ENCODE measurements at regions of chr4 and their contacts with region 1.

Region 1: GRCh38 chr4:102760645-102761295 is at the start of gene MANBA:
- DNase-seq: peak; percentile 90
- H3K4me3 ChIP-seq: peak within 1 kb of the TSS; percentile 52 to 99 (median 84)
- H3K27ac ChIP-seq: peak within 1 kb of the TSS; percentile 78 to 93 (median 82)
- H3K4me1 ChIP-seq: peaks cover 0 to 17% (median 10%) of the 10 kb centered on the region in 4 donors
- H3K27me3 ChIP-seq: no peaks in the 10 kb centered on the region
- CTCF ChIP-seq: no peak
- EP300 ChIP-seq: no peak
- POLR2A ChIP-seq: peak in 1 of 2 donors; percentile 32
- total RNA-seq, gene MANBA: 25.3 to 47.4 (median 44.8) TPM

Region 2: GRCh38 chr4:102352781-102353180 is 408.0 kb before region 1 on chr4:
- intact Hi-C with region 1: no loop called
- DNase-seq: no peak
- H3K4me3 ChIP-seq: no peak overlapping the region
- H3K27ac ChIP-seq: no peak overlapping the region
- H3K4me1 ChIP-seq: no peaks in the 10 kb centered on the region
- H3K27me3 ChIP-seq: no peaks in the 10 kb centered on the region
- CTCF ChIP-seq: no peak
- EP300 ChIP-seq: no peak
- POLR2A ChIP-seq: no peak

Region 3: DNA sequence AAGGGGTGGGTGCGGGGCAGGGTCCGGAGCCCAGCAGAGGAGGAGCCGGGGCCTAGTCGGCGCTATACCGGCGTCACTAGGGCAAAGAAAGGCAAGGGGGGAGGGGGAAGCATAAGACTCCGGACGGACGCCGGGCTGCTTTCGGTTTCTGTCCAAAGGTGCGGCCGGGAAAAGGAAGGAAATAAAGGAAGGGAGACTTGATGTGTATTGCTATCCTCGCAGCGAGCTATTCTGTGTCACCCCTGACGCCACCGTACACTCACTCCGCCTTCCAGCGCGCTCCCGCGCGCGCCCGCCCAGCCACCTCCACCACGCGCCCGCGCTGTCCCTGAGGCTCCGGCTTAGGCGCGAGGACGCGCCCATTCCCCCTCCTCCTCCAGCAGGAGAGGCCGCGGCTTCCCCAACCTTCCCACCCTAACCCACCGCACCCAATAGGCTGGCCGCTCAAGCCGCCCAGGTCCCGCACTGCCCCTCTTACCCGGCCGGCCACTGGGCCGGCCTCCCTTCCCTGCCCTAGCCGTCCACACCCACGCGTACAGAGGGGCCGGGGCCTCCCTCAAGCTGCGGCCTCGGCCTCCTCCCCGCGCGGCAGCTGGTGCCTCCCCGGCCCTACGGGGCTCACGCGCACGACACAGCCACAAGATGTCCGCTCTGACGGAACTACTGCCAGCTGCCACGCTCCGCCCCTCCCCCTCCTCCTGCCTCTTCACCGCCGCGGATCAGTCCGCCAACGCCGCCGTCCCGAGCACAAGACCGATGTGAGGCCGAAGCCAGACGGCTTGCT is 66.3 kb after region 1 on chr4 and contains the start of gene UBE2D3:
- intact Hi-C with region 1: loop called (anchors 2 kb)
- DNase-seq: peak; percentile 99
- H3K4me3 ChIP-seq: peak within 1 kb of the TSS; percentile 90 to 96 (median 93)
- H3K27ac ChIP-seq: peak within 1 kb of the TSS; percentile 99 to 100 (median 100)
- H3K4me1 ChIP-seq: peaks cover 4 to 43% (median 35%) of the 10 kb centered on the region in 4 donors
- H3K27me3 ChIP-seq: no peaks in the 10 kb centered on the region
- CTCF ChIP-seq: no peak
- EP300 ChIP-seq: peak in 2 of 4 donors; percentile 46 to 49
- POLR2A ChIP-seq: peak; percentile 59 to 82
- total RNA-seq, gene UBE2D3: 273 to 404 (median 305) TPM

Region 4: GRCh38 chr4:103054030-103054429 is 293.3 kb after region 1 on chr4:
- intact Hi-C with region 1: no loop called
- DNase-seq: no peak
- H3K4me3 ChIP-seq: no peak overlapping the region
- H3K27ac ChIP-seq: no peak overlapping the region
- H3K4me1 ChIP-seq: no peaks in the 10 kb centered on the region
- H3K27me3 ChIP-seq: no peaks in the 10 kb centered on the region
- CTCF ChIP-seq: no peak
- EP300 ChIP-seq: no peak
- POLR2A ChIP-seq: no peak